Dorsolateral prefrontal cortex (tissue), 120 donors: ENCODE measurements at regions of chr3 and their contacts with region 1.

Region 1: GRCh38 chr3:173411375-173411973 is 13.9 kb downstream of the NLGN1 start:
- DNase-seq: peak in 3 of 10 donors; percentile 15 to 39 (median 34)
- H3K4me3 ChIP-seq: peak overlapping the region in 45 of 59 donors; percentile 1 to 60 (median 29)
- H3K27ac ChIP-seq: peak overlapping the region in 57 of 59 donors; percentile 7 to 88 (median 72)
- H3K27me3 ChIP-seq: no peaks in the 10 kb centered on the region
- CTCF ChIP-seq: peak; percentile 46 to 83 (median 69)

Region 2: DNA sequence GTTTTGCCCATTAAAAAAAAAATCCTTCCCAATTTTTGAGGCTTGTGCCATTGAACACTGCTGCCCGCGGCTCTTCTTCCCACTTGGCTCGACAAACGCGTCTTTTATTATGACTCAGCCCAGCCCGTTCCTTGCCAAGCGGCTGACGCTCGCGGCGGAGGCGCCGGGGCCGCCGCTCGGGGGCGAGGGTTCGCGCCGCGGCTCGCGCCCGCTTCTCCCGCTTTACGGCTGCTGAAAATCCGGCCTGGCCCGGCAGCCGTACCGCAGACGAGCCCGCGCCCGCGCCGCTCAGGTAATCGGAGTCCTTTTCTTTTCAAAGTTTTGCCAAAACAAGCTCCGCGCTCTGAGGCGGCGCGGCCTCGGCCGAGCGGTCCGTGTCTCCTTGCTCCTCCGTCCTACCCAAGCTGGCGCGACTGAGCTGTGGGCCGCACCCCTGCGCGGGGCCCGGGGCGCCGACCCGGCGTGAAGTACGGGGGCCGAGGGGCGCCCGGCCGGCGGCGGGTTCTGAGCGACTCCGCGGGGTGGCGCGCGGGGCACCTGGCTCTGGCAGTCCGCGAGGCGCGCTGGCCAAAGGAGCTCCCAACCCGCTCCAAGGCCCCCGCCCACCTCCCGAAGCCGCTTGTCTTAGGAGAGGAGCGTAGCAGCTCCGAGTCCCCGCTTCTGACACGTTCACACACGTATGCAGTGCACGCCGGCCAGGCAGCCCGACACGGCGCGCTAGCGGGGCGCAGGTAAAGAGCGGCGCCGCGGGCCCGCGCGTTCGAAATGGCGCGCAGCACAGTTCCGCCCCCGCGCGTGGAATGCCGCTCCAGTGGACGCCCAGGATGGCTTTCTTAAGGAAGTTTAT is 1029.5 kb after region 1 on chr3:
- intact Hi-C with region 1: loop called in 1 of 2 experiments (anchors 5 kb)
- DNase-seq: peak; percentile 57 to 89 (median 78)
- H3K4me3 ChIP-seq: peak overlapping the region; percentile 32 to 95 (median 79)
- H3K27ac ChIP-seq: peak overlapping the region; percentile 47 to 98 (median 91)
- H3K27me3 ChIP-seq: no peaks in the 10 kb centered on the region
- CTCF ChIP-seq: peak in 37 of 56 donors; percentile 4 to 61 (median 29)